Naive thymus-derived CD4-positive, alpha-beta T cell (primary cell): ENCODE measurements at regions of chr19 and their contacts with region 1.

Region 1: DNA sequence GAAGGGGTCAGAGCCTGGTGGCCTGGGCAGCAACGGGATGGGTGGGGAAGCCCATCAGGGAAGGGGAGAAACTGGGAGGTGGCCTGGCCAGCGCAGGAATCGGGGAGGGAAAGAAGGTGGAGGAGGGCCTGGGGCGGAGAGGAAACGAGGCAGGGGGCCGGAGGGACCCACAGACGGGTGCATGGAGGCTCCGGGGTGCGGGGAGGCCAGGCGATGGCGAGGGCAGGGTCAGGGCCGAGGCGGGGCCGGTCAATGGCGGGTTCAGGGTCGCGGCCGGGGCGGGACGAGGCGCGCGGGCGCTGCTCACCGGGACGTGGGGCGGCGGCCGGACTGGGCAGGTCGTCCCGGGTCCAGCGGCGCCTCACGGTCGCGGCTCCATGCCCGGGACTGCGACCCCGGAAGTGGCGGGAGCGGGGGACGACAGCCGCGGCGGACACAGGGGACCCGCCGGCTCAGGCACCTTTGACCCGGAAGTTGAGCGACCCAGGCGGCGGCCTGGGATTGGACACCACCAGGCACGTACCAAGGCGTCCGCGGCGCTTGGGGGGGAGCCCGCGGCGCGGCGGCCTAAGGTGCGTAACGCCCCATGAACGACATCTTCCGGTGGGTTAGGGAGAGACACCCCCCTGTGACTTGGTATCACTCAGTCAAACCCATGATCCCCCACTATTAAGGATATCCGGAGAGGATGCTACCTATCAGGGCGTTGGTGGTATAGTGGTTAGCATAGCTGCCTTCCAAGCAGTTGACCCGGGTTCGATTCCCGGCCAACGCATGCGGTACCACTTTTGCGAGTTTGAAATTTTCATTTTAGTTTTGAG is at the start of gene DPP9:
- DNase-seq: peak; percentile 84 to 100 (median 99)
- ATAC-seq: peak; percentile 99
- H3K4me3 ChIP-seq: peak within 1 kb of the TSS; percentile 96
- H3K4me3 Mint-ChIP-seq: peak within 1 kb of the TSS; percentile 83 to 99 (median 95)
- H3K27ac ChIP-seq: peak within 1 kb of the TSS; percentile 87
- H3K27ac Mint-ChIP-seq: peak within 1 kb of the TSS; percentile 93 to 100 (median 98)
- H3K4me1 ChIP-seq: peaks cover 19 to 26% of the 10 kb centered on the region in 2 donors
- H3K4me1 Mint-ChIP-seq: peaks cover 21 to 48% (median 37%) of the 10 kb centered on the region in 7 donors
- H3K27me3 ChIP-seq: no peaks in the 10 kb centered on the region
- H3K27me3 Mint-ChIP-seq: peaks cover 0 to 10% (median 5%) of the 10 kb centered on the region in 5 donors
- total RNA-seq, gene DPP9: 71.2 to 90.7 (median 81.4) TPM

Region 2: GRCh38 chr19:4246767-4247593 is 476.6 kb before region 1 on chr19 and contains the start of gene YJU2:
- CTCF ChIA-PET with region 1: no interaction called
- POLR2A ChIA-PET with region 1: no interaction called
- intact Hi-C with region 1: loop called in 1 of 2 experiments (anchors 2 kb)
- DNase-seq: peak; percentile 92 to 100 (median 99)
- ATAC-seq: peak; percentile 96
- H3K4me3 ChIP-seq: peak within 1 kb of the TSS; percentile 100
- H3K4me3 Mint-ChIP-seq: peak within 1 kb of the TSS; percentile 85 to 98 (median 96)
- H3K27ac ChIP-seq: peak within 1 kb of the TSS; percentile 99
- H3K27ac Mint-ChIP-seq: peak within 1 kb of the TSS; percentile 97 to 100 (median 99)
- H3K4me1 ChIP-seq: peaks cover 12 to 13% of the 10 kb centered on the region in 2 donors
- H3K4me1 Mint-ChIP-seq: peaks cover 10 to 33% (median 24%) of the 10 kb centered on the region in 7 donors
- H3K27me3 ChIP-seq: no peaks in the 10 kb centered on the region
- H3K27me3 Mint-ChIP-seq: peaks cover 0 to 2% (median 0%) of the 10 kb centered on the region in 5 donors
- total RNA-seq, gene YJU2: 28.5 to 42.1 (median 31.9) TPM

Region 3: GRCh38 chr19:4669723-4670480 is 53.7 kb before region 1 on chr19 and contains the start of gene MYDGF:
- CTCF ChIA-PET with region 1: no interaction called
- POLR2A ChIA-PET with region 1: no interaction called
- intact Hi-C with region 1: loop called (anchors 1 to 2 kb)
- DNase-seq: peak; percentile 86 to 95 (median 92)
- ATAC-seq: peak; percentile 100
- H3K4me3 ChIP-seq: peak within 1 kb of the TSS; percentile 65
- H3K4me3 Mint-ChIP-seq: peak within 1 kb of the TSS; percentile 77 to 92 (median 86)
- H3K27ac ChIP-seq: peak within 1 kb of the TSS; percentile 81
- H3K27ac Mint-ChIP-seq: peak within 1 kb of the TSS; percentile 28 to 95 (median 84)
- H3K4me1 ChIP-seq: peaks cover 10 to 13% of the 10 kb centered on the region in 2 donors
- H3K4me1 Mint-ChIP-seq: peaks cover 0 to 20% (median 16%) of the 10 kb centered on the region in 7 donors
- H3K27me3 ChIP-seq: no peaks in the 10 kb centered on the region
- H3K27me3 Mint-ChIP-seq: no peaks in the 10 kb centered on the region
- total RNA-seq, gene MYDGF: 28.1 to 81.0 (median 32.1) TPM

Region 4: GRCh38 chr19:4909897-4910593 is 186.5 kb after region 1 on chr19:
- CTCF ChIA-PET with region 1: no interaction called
- POLR2A ChIA-PET with region 1: interaction called, 4 read pairs
- intact Hi-C with region 1: loop called (anchors 1 to 2 kb)
- DNase-seq: peak; percentile 88 to 96 (median 94)
- ATAC-seq: peak; percentile 95
- H3K4me3 ChIP-seq: peak overlapping the region; percentile 61
- H3K4me3 Mint-ChIP-seq: peak overlapping the region; percentile 93 to 100 (median 99)
- H3K27ac ChIP-seq: peak overlapping the region; percentile 67
- H3K27ac Mint-ChIP-seq: peak overlapping the region in 4 of 9 donors; percentile 86 to 99 (median 89)
- H3K4me1 ChIP-seq: peaks cover 48 to 54% of the 10 kb centered on the region in 2 donors
- H3K4me1 Mint-ChIP-seq: peaks cover 44 to 74% (median 58%) of the 10 kb centered on the region in 7 donors
- H3K27me3 ChIP-seq: no peaks in the 10 kb centered on the region
- H3K27me3 Mint-ChIP-seq: no peaks in the 10 kb centered on the region

Region 5: DNA sequence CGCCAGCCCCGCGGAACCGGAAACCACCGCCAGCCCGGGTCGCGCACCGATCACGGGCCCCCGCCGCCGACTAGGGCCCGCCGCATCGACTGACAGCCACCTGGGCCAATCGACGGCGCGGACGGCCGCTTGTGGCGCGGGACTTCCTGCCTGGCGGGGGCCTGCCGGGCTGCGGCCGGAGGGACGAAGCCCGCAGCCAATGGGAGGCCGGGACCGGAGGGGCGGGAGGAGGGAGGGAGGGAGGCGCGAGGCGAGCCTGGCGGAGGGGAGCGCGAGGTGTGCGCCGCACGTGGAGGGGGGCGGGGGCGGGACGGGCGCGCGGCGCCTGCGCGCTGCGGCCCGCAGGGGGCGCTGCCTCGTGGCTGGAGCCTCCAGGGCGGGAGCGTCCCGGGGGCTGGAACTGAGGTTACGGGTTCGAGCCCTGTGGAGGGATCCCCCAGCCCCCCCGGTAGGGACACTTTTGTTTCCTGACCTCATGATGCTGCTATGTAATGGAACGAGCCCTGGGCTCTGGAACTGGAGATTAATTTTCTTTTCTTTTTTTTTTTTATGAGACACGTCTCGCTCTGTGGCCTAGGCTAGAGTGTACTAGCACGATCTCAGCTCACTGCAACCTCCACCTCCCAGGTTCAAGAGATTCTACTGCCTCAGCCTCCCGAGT is 1556.5 kb after region 1 on chr19 and contains the start of gene MLLT1:
- CTCF ChIA-PET with region 1: no interaction called
- POLR2A ChIA-PET with region 1: no interaction called
- intact Hi-C with region 1: loop called in 1 of 2 experiments (anchors 5 kb)
- DNase-seq: peak; percentile 88 to 98 (median 90)
- ATAC-seq: peak; percentile 96
- H3K4me3 ChIP-seq: peak within 1 kb of the TSS; percentile 54
- H3K4me3 Mint-ChIP-seq: peak within 1 kb of the TSS; percentile 85 to 97 (median 92)
- H3K27ac ChIP-seq: peak within 1 kb of the TSS; percentile 78
- H3K27ac Mint-ChIP-seq: peak within 1 kb of the TSS; percentile 87 to 95 (median 93)
- H3K4me1 ChIP-seq: peaks cover 3 to 20% of the 10 kb centered on the region in 2 donors
- H3K4me1 Mint-ChIP-seq: peaks cover 30 to 42% (median 39%) of the 10 kb centered on the region in 7 donors
- H3K27me3 ChIP-seq: no peaks in the 10 kb centered on the region
- H3K27me3 Mint-ChIP-seq: peaks cover 0 to 6% (median 0%) of the 10 kb centered on the region in 5 donors
- total RNA-seq, gene MLLT1: 33.3 to 47.5 (median 39.0) TPM